ENCODE measurements at regions of chr2 and their contacts with region 1.

Region 1: GRCh38 chr2:54704688-54705605 is 18.5 kb upstream of the EML6 start:
- DNase-seq: no peak
- H3K4me3 Mint-ChIP-seq: no peak overlapping the region
- H3K27ac Mint-ChIP-seq: no peak overlapping the region
- H3K4me1 Mint-ChIP-seq: peaks cover 9% of the 10 kb centered on the region
- H3K27me3 Mint-ChIP-seq: peaks cover 56% of the 10 kb centered on the region

Region 2: DNA sequence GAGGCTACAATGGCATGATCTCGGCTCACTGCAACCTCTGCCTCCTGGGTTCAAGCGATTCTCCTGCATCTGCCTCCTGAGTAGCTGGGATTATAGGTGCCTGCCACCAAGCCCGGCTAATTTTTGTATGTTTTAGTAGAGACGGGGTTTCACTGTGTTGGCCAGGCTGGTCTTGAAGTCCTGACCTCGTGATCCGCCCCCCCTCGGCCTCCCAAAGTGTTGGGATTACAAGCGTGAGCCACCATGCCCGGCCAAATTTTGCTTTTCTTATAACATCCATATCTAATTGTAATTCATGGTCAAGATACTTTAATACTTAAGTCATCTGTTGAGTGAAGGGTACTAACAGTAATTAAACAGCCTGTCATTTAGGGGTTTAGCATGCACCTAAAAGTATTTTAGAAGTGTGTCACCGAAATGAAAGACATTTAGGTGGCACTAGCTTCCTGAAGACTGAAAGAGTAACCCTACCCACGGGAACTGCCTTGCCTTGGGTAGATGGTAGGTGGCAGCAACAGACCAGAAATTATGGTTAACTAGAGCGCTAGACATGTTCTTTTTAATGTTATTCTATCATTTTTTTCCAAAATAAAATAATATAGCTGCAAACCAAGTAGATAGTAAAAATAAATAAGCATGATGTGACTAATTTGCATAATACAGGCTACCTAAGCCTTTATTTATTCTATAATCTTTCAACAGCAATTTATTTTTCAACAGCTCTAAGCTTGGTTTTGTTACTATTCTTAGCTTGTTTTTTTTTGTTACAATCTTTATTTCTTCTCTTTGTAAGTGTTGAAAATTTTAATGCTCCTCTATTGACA is 598.1 kb before region 1 on chr2:
- CTCF ChIA-PET with region 1: interaction called, 16 read pairs
- POLR2A ChIA-PET with region 1: no interaction called
- DNase-seq: peak; percentile 57
- H3K4me3 Mint-ChIP-seq: no peak overlapping the region
- H3K27ac Mint-ChIP-seq: no peak overlapping the region
- H3K4me1 Mint-ChIP-seq: peaks cover 14% of the 10 kb centered on the region
- H3K27me3 Mint-ChIP-seq: no peaks in the 10 kb centered on the region

Region 3: GRCh38 chr2:54522624-54523281 is 182.2 kb before region 1 on chr2:
- CTCF ChIA-PET with region 1: interaction called, 117 read pairs
- POLR2A ChIA-PET with region 1: no interaction called
- DNase-seq: peak; percentile 64
- H3K4me3 Mint-ChIP-seq: no peak overlapping the region
- H3K27ac Mint-ChIP-seq: peak overlapping the region; percentile 33
- H3K4me1 Mint-ChIP-seq: peaks cover 17% of the 10 kb centered on the region
- H3K27me3 Mint-ChIP-seq: peaks cover 17% of the 10 kb centered on the region

Region 4: GRCh38 chr2:54657664-54658083 is 47.3 kb before region 1 on chr2:
- CTCF ChIA-PET with region 1: interaction called, 24 read pairs
- POLR2A ChIA-PET with region 1: interaction called, 5 read pairs
- DNase-seq: peak; percentile 46
- H3K4me3 Mint-ChIP-seq: no peak overlapping the region
- H3K27ac Mint-ChIP-seq: peak overlapping the region; percentile 30
- H3K4me1 Mint-ChIP-seq: peaks cover 25% of the 10 kb centered on the region
- H3K27me3 Mint-ChIP-seq: no peaks in the 10 kb centered on the region

Region 5: DNA sequence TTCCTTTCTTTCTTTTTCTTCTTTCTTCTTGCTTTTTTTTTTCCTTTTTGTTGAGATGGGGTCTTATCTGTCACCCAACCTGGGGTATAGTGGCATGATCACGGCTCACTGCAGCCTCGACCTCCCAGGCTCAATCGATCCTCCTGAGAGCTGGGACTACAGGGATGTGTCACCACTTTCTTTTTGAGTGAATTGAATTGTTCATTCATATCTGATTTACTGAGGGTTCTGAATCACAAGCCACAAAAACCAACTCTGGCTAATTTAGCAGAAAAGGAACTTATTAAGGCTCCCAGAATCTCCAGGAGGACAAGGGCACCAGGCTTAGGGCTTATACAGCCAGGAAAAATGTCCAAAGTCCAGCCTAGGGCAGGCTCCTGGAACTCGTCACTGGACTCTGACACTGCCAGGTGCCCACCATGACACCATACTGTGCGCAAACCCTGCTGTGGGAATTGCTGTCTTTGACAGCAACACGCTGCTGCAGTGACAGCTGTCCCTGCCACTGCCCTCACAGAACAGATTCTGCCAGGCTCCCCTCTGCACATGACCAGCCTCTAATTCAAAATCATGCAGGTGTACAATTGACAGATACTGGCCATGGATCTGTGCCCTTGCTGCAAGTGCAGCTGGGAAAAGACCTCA is 24.4 kb before region 1 on chr2:
- CTCF ChIA-PET with region 1: interaction called, 24 read pairs
- POLR2A ChIA-PET with region 1: no interaction called
- DNase-seq: peak; percentile 52
- H3K4me3 Mint-ChIP-seq: peak overlapping the region; percentile 69
- H3K27ac Mint-ChIP-seq: peak overlapping the region; percentile 60
- H3K4me1 Mint-ChIP-seq: peaks cover 46% of the 10 kb centered on the region
- H3K27me3 Mint-ChIP-seq: peaks cover 63% of the 10 kb centered on the region

Region 6: DNA sequence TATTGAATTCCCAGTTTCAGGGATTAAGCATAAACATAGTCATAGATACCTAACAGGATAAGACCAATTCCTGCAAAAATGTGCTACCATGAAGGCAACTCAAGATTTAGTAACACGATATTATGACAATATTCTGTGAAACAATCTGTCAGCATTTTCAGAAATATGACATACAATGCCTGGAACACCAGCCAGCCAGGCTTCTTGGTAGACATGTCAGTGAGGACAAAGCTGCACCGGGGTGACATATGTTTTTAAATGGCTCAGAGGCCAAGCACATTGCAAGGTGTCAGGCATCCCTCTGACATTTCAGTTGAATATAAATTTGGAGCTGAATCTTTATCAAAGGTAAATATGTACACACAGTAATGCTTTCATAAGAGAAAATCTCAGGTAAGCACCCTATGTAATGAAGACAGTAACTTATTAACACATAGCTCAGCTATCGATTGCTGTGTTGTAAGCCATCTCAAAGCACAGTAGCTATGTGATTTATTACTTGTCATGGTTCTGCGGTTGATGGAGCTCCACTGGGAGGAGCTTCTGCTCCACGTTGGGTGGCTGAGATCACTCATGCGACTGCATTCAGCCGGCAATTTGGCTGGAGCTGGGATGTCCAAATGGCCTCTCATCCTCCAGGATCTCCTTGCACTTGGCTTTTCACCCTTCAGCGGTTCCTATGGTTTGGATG is 13.4 kb before region 1 on chr2:
- CTCF ChIA-PET with region 1: interaction called, 12 read pairs
- POLR2A ChIA-PET with region 1: interaction called, 4 read pairs
- DNase-seq: no peak
- H3K4me3 Mint-ChIP-seq: no peak overlapping the region
- H3K27ac Mint-ChIP-seq: no peak overlapping the region
- H3K4me1 Mint-ChIP-seq: peaks cover 18% of the 10 kb centered on the region
- H3K27me3 Mint-ChIP-seq: peaks cover 53% of the 10 kb centered on the region

Measured in activated CD4-positive, alpha-beta memory T cell treated with anti-CD3 and anti-CD28 coated beads, Interleukin-2, amount 10 ng/mL, durations not matched to agents 7 days and 5 days (primary cell).